ENCODE measurements at regions of chr1 and their contacts with region 1.

Region 1: GRCh38 chr1:151070474-151071276 is at the start of gene GABPB2:
- DNase-seq: peak; percentile 91
- ATAC-seq: peak; percentile 85
- H3K4me3 Mint-ChIP-seq: peak within 1 kb of the TSS; percentile 90
- H3K27ac Mint-ChIP-seq: peak within 1 kb of the TSS; percentile 98
- H3K4me1 Mint-ChIP-seq: peaks cover 26% of the 10 kb centered on the region
- H3K27me3 Mint-ChIP-seq: no peaks in the 10 kb centered on the region
- total RNA-seq, gene GABPB2: 20.0 to 23.9 TPM

Region 2: GRCh38 chr1:151059078-151059907 is 11.4 kb before region 1 on chr1 and contains the start of gene CDC42SE1:
- CTCF ChIA-PET with region 1: interaction called, 69 read pairs
- DNase-seq: peak; percentile 92
- ATAC-seq: peak; percentile 80
- H3K4me3 Mint-ChIP-seq: peak within 1 kb of the TSS; percentile 91
- H3K27ac Mint-ChIP-seq: peak within 1 kb of the TSS; percentile 96
- H3K4me1 Mint-ChIP-seq: peaks cover 53% of the 10 kb centered on the region
- H3K27me3 Mint-ChIP-seq: no peaks in the 10 kb centered on the region
- total RNA-seq, gene CDC42SE1: 214 to 235 TPM

Region 3: DNA sequence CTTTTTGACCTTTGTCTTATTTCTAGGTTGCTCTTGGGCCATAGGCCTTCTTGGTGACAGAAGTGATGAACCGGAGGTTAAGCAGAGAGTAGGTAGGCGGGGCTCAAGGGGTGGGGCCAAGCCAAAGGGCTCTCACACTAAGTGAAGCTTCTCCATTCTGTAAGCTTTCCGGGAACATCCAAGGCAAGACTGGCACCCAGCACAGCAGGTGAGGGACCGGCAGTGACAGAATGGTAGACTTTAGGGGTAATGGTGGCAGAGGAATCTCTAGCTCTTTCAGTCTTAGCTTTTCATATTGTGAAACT is 85.8 kb after region 1 on chr1 and contains the start of gene TNFAIP8L2:
- CTCF ChIA-PET with region 1: interaction called, 10 read pairs
- DNase-seq: peak; percentile 90
- ATAC-seq: peak; percentile 92
- H3K4me3 Mint-ChIP-seq: peak within 1 kb of the TSS; percentile 96
- H3K27ac Mint-ChIP-seq: peak within 1 kb of the TSS; percentile 93
- H3K4me1 Mint-ChIP-seq: peaks cover 51% of the 10 kb centered on the region
- H3K27me3 Mint-ChIP-seq: no peaks in the 10 kb centered on the region
- total RNA-seq, gene TNFAIP8L2: 14.5 to 17.6 TPM

Region 4: DNA sequence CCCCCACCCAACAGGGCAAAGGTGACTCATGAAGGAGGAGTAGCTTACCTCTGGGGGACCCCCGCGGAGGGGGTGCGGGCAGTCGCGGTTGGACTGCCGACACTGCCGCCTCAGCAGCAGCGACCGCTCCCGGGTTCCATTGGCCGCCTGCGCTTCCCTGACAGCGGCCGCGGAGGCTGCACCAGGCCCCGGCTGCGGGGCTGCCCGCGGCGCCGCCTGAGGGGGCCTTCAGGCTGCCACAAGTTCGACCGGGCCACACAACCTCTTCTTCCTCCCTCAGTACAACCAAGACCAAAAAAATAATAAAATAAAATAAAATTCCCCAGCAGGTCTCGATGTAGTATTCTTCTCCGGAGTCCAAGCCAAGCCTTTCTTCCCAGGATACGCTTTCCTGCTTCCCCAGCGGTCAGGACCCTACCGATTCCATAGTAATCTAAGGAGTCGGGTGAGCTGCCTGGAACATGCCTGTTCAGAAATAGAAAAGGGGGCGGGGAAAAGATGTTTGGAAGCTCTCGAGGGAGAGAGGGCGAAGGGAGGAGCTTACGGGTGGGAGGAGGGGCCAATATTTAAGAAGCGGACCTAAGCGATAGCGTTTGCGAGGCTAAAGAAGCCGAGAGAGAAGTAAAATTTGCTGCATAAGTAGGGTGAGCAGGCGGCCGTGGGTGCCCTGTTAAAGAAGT is 256.7 kb after region 1 on chr1 and contains the start of gene PI4KB:
- CTCF ChIA-PET with region 1: no interaction called
- DNase-seq: peak; percentile 96
- ATAC-seq: peak; percentile 94
- H3K4me3 Mint-ChIP-seq: peak within 1 kb of the TSS; percentile 91
- H3K27ac Mint-ChIP-seq: peak within 1 kb of the TSS; percentile 93
- H3K4me1 Mint-ChIP-seq: peaks cover 34% of the 10 kb centered on the region
- H3K27me3 Mint-ChIP-seq: no peaks in the 10 kb centered on the region
- total RNA-seq, gene PI4KB: 68.5 to 73.9 TPM

Measured in activated CD8-positive, alpha-beta memory T cell treated with anti-CD3 and anti-CD28 coated beads, Interleukin-2, amount 10 ng/mL, durations not matched to agents 7 days and 5 days (primary cell).